ENCODE measurements at regions of chr19 and their contacts with region 1.

Region 1: DNA sequence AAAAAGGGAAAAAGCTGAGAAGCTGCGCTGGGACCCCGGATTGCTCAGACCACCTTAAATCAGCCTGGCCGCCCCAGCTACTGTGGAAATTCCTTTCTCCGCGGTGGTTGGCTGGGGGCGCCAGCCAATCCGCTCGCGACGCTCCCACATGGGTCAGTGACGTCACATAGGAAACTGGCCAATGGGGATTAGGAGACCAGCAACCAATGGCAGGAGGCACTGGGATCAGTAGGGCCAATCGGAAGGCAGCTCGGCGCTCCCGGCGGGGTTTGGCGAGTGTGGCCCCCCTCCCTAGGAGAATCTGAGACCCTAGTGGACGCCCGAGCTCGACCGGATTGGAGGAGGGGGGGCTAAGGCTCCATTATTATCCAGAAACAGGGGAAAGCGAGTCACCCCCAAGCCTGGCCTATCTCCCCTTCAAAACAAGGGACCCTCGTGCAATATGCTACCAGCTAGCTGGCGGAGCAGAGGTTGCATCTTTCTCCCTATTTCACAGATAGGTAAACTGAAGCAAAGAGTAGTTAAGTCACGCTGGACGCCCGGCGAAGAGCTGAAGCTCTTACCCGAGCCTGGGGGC is 6.5 kb upstream of the TLE2 start:
- DNase-seq: peak; percentile 99
- H3K4me3 ChIP-seq: peak overlapping the region; percentile 52 to 66
- H3K27ac ChIP-seq: peak overlapping the region; percentile 80 to 96
- H3K4me1 ChIP-seq: peaks cover 18% of the 10 kb centered on the region
- H3K27me3 ChIP-seq: no peaks in the 10 kb centered on the region
- CTCF ChIP-seq: peak in 2 of 3 experiments; percentile 19 to 24
- POLR2A ChIP-seq: no peak

Region 2: GRCh38 chr19:2977001-2977685 is 58.5 kb before region 1 on chr19 and contains the start of gene TLE6:
- intact Hi-C with region 1: loop called (anchors 10 kb)
- DNase-seq: peak; percentile 98
- H3K4me3 ChIP-seq: peak within 1 kb of the TSS; percentile 33 to 43
- H3K27ac ChIP-seq: peak within 1 kb of the TSS in 1 of 2 donors; percentile 66
- H3K4me1 ChIP-seq: peaks cover 30% of the 10 kb centered on the region
- H3K27me3 ChIP-seq: no peaks in the 10 kb centered on the region
- CTCF ChIP-seq: no peak
- POLR2A ChIP-seq: no peak
- total RNA-seq, gene TLE6: 9.1 to 12.5 TPM